B cell (primary cell): ENCODE measurements at regions of chr15 and their contacts with region 1.

Region 1: DNA sequence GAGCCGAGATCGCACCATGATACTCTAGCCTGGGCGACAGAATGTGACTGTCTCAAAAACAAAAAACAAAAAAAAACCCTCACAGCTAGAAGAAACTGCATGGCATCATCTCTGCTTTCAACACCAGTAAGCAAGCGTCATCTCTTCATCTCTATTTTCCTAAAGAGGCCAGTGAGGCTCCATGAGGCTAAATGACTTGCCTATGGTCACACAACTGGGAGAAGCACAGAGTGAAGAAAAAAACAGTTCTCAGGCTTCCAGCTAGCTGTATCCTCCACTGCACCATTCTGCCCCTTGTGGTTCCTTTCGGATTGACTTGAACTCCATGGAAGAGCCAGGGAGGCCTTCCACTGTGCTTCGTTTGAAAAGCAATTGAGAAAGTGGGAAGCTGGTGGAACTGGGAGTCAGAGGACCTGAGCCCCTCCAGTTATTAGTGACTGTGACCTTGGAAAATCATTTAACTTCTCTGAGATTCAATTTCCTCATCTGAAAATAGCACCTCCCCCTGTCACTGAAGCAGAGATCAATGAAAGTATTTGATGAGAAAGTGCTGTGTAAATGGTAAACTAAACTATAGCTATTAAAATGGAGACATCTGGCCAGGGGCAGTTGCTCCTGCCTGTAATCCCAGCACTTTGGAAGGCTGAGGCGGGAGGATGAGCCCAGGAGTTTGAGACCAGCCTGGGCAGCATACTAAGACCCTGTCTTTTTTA is 32.1 kb upstream of the DENND4A start:
- DNase-seq: peak; percentile 57
- ATAC-seq: peak; percentile 31
- H3K4me3 ChIP-seq: no peak overlapping the region
- H3K4me3 Mint-ChIP-seq: no peak overlapping the region
- H3K27ac ChIP-seq: no peak overlapping the region
- H3K27ac Mint-ChIP-seq: peak overlapping the region; percentile 56
- H3K4me1 ChIP-seq: peaks cover 72 to 77% of the 10 kb centered on the region in 2 donors
- H3K4me1 Mint-ChIP-seq: peaks cover 66% of the 10 kb centered on the region
- H3K27me3 ChIP-seq: no peaks in the 10 kb centered on the region
- H3K27me3 Mint-ChIP-seq: no peaks in the 10 kb centered on the region
- CTCF ChIP-seq: peak; percentile 46

Region 2: DNA sequence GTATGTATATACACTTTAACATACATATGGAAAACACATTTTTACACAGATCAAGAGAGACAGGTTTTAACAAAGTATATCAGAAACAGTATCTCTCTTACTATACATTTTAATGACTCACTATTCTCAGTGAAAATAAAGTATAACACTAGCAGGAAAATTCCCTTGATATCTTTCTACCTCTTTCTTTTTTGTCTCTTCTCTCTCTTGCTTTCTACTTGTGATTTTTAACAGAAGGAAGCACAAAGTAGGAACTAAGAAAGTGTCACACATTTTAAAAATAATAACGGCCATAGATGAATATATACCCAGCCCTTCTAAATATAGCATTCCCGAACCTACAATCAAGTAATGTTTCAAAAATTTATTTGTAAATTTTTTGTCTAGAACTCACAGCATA is 36.9 kb before region 1 on chr15:
- CTCF ChIA-PET with region 1: interaction called, 26 read pairs
- POLR2A ChIA-PET with region 1: interaction called, 23 read pairs
- intact Hi-C with region 1: loop called (anchors 1 kb)
- DNase-seq: no peak
- ATAC-seq: no peak
- H3K4me3 ChIP-seq: peak overlapping the region in 4 of 5 experiments; percentile 13 to 58 (median 28)
- H3K4me3 Mint-ChIP-seq: peak overlapping the region; percentile 59
- H3K27ac ChIP-seq: peak overlapping the region; percentile 68 to 72
- H3K27ac Mint-ChIP-seq: peak overlapping the region; percentile 79
- H3K4me1 ChIP-seq: peaks cover 44 to 53% of the 10 kb centered on the region in 2 donors
- H3K4me1 Mint-ChIP-seq: peaks cover 51% of the 10 kb centered on the region
- H3K27me3 ChIP-seq: no peaks in the 10 kb centered on the region
- H3K27me3 Mint-ChIP-seq: no peaks in the 10 kb centered on the region
- CTCF ChIP-seq: no peak

Region 3: DNA sequence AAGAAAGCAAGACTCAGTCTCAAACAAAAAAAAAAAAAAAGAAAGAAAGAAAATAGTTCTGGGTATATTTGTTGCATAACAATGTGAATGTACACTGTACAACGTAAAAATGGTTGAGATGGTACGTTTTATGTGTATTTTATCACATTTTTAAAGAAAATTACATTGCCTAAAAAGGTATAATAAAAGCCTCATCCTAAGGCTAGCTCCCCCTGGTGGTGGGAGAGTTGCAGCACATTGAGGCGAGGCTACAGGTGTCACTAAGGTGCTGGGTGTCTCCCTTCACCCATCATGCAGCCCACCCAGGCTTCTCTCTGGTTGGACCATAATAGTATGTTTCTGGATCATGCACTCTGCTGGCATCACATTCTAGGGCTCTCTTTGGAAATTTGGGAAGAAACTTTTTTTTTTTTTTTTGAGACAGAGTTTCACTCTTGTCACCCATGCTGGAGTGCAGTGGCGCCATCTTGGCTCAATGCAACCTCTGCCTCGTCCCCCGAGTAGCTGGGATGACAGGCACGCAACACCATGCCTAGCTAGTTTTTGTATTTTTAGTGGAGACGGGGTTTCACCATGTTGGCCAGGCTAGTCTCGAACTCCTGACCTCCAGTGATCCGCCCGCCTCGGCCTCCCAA is 32.8 kb after region 1 on chr15:
- CTCF ChIA-PET with region 1: interaction called, 7 read pairs
- POLR2A ChIA-PET with region 1: no interaction called
- intact Hi-C with region 1: loop called (anchors 5 kb)
- DNase-seq: peak; percentile 85
- ATAC-seq: peak; percentile 88
- H3K4me3 ChIP-seq: no peak overlapping the region
- H3K4me3 Mint-ChIP-seq: no peak overlapping the region
- H3K27ac ChIP-seq: no peak overlapping the region
- H3K27ac Mint-ChIP-seq: no peak overlapping the region
- H3K4me1 ChIP-seq: no peaks in the 10 kb centered on the region
- H3K4me1 Mint-ChIP-seq: peaks cover 11% of the 10 kb centered on the region
- H3K27me3 ChIP-seq: no peaks in the 10 kb centered on the region
- H3K27me3 Mint-ChIP-seq: no peaks in the 10 kb centered on the region
- CTCF ChIP-seq: peak; percentile 95